ENCODE measurements at regions of chr2 and their contacts with region 1.

Region 1: GRCh38 chr2:135709992-135710391 is 31.7 kb upstream of the UBXN4 start:
- DNase-seq: no peak
- ATAC-seq: peak; percentile 89
- H3K4me3 ChIP-seq: no peak overlapping the region
- H3K27ac ChIP-seq: no peak overlapping the region
- H3K4me1 ChIP-seq: no peaks in the 10 kb centered on the region
- H3K27me3 ChIP-seq: no peaks in the 10 kb centered on the region
- CTCF ChIP-seq: peak; percentile 87 to 89 (median 89)
- EP300 ChIP-seq: no peak
- POLR2A ChIP-seq: no peak
- RAD21 ChIP-seq: peak; percentile 95

Region 2: GRCh38 chr2:135004005-135004746 is 705.8 kb before region 1 on chr2:
- CTCF ChIA-PET with region 1: interaction called, 124 read pairs
- POLR2A ChIA-PET with region 1: no interaction called
- RAD21 ChIA-PET with region 1: interaction called, 51 read pairs
- SMC1A ChIA-PET with region 1: interaction called, 41 read pairs
- in situ Hi-C with region 1: loop called (anchors 5 kb)
- intact Hi-C with region 1: loop called (anchors 1 kb)
- DNase-seq: peak; percentile 17
- ATAC-seq: peak; percentile 100
- H3K4me3 ChIP-seq: no peak overlapping the region
- H3K27ac ChIP-seq: no peak overlapping the region
- H3K4me1 ChIP-seq: no peaks in the 10 kb centered on the region
- H3K27me3 ChIP-seq: peaks cover 0 to 2% of the 10 kb centered on the region in 2 experiments; a peak in 1 of 4 replicates
- CTCF ChIP-seq: peak; percentile 94 to 98 (median 96); a peak in 5 of 6 replicates
- EP300 ChIP-seq: no peak
- POLR2A ChIP-seq: no peak
- RAD21 ChIP-seq: peak; percentile 95

Region 3: GRCh38 chr2:135150684-135151083 is 559.3 kb before region 1 on chr2:
- CTCF ChIA-PET with region 1: no interaction called
- POLR2A ChIA-PET with region 1: no interaction called
- RAD21 ChIA-PET with region 1: no interaction called
- SMC1A ChIA-PET with region 1: no interaction called
- in situ Hi-C with region 1: no loop called
- intact Hi-C with region 1: loop called (anchors 10 kb)
- DNase-seq: no peak
- ATAC-seq: no peak
- H3K4me3 ChIP-seq: no peak overlapping the region
- H3K27ac ChIP-seq: no peak overlapping the region
- H3K4me1 ChIP-seq: peaks cover 8% of the 10 kb centered on the region
- H3K27me3 ChIP-seq: no peaks in the 10 kb centered on the region
- CTCF ChIP-seq: no peak
- EP300 ChIP-seq: no peak
- POLR2A ChIP-seq: no peak
- RAD21 ChIP-seq: no peak

Region 4: DNA sequence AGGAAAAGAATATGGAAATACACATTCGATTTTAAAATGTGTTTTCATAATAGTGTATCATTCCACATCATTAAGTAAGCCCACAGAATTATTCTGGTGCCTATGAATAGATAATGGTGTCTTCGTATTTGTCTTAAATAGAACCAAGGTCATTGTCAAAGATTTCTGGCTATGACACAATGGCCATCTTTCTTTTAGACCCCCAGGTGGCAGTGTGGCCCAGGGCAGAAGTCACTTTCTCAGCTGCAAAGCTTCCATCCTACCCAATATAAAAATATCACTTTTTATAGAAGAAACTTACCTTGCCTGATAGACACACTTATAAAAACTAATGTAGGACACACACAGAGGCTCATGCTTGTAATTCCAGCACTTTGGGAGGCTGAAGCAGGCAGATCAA is 236.4 kb before region 1 on chr2:
- CTCF ChIA-PET with region 1: interaction called, 102 read pairs
- POLR2A ChIA-PET with region 1: interaction called, 9 read pairs
- RAD21 ChIA-PET with region 1: interaction called, 64 read pairs
- SMC1A ChIA-PET with region 1: interaction called, 66 read pairs
- in situ Hi-C with region 1: loop called (anchors 5 kb)
- intact Hi-C with region 1: loop called (anchors 1 kb)
- DNase-seq: peak; percentile 5
- ATAC-seq: peak; percentile 86
- H3K4me3 ChIP-seq: no peak overlapping the region
- H3K27ac ChIP-seq: no peak overlapping the region
- H3K4me1 ChIP-seq: no peaks in the 10 kb centered on the region
- H3K27me3 ChIP-seq: no peaks in the 10 kb centered on the region
- CTCF ChIP-seq: peak; percentile 52 to 76 (median 62)
- EP300 ChIP-seq: no peak
- POLR2A ChIP-seq: no peak
- RAD21 ChIP-seq: peak; percentile 85

Region 5: DNA sequence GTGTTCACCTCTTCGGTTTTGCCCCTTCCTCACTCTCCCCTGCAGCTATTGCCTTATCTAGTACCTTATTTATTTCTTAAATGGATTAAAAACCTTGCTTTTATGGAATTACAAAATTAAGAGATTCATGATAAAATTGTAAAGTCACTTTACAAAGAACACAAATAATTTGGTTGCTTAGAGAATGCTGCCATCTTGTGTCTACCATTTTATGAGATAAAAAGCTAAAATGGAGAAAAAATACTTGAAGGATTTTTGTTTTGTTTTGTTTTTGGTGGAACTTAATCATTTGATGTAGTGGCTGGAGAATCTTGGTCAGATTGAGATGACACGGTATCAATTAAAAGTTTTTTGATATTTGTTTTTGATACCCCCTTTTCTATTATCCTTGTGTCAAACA is 109.1 kb before region 1 on chr2:
- CTCF ChIA-PET with region 1: interaction called, 21 read pairs
- POLR2A ChIA-PET with region 1: no interaction called
- RAD21 ChIA-PET with region 1: interaction called, 4 read pairs
- SMC1A ChIA-PET with region 1: no interaction called
- in situ Hi-C with region 1: no loop called
- intact Hi-C with region 1: no loop called
- DNase-seq: no peak
- ATAC-seq: no peak
- H3K4me3 ChIP-seq: no peak overlapping the region
- H3K27ac ChIP-seq: no peak overlapping the region
- H3K4me1 ChIP-seq: no peaks in the 10 kb centered on the region
- H3K27me3 ChIP-seq: no peaks in the 10 kb centered on the region
- CTCF ChIP-seq: no peak; a peak in 1 of 6 replicates
- EP300 ChIP-seq: no peak
- POLR2A ChIP-seq: no peak
- RAD21 ChIP-seq: no peak

Region 6: GRCh38 chr2:135689679-135690078 is 20.3 kb before region 1 on chr2:
- CTCF ChIA-PET with region 1: interaction called, 16 read pairs
- POLR2A ChIA-PET with region 1: no interaction called
- RAD21 ChIA-PET with region 1: interaction called, 3 read pairs
- SMC1A ChIA-PET with region 1: interaction called, 11 read pairs
- in situ Hi-C with region 1: no loop called
- intact Hi-C with region 1: no loop called
- DNase-seq: no peak
- ATAC-seq: peak; percentile 60
- H3K4me3 ChIP-seq: peak overlapping the region; percentile 31; the same call in 1 of the 2 replicates
- H3K27ac ChIP-seq: peak overlapping the region; percentile 76
- H3K4me1 ChIP-seq: peaks cover 17% of the 10 kb centered on the region
- H3K27me3 ChIP-seq: no peaks in the 10 kb centered on the region
- CTCF ChIP-seq: no peak
- EP300 ChIP-seq: no peak
- POLR2A ChIP-seq: no peak
- RAD21 ChIP-seq: no peak

Region 7: DNA sequence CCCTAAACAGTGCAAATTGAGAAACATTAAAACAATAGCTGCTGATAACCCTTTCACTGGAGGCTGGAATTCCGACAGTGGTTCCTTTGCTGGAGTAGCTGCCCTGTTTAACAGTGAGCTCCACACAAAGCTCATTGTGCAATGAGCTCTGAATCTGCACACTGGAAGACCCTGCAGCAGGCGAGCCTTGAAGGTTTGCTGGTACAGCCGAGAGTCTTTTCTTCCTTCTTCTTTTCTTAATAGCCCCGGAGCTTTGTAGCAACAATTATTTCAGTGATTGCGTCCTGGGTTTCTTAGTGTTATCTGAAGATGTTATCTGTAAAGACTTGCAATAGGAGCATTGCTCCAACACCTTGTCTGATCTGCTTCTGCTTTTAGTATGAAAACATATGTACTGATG is 458.7 kb after region 1 on chr2:
- CTCF ChIA-PET with region 1: no interaction called
- POLR2A ChIA-PET with region 1: no interaction called
- RAD21 ChIA-PET with region 1: no interaction called
- SMC1A ChIA-PET with region 1: no interaction called
- in situ Hi-C with region 1: no loop called
- intact Hi-C with region 1: no loop called
- DNase-seq: no peak
- ATAC-seq: no peak
- H3K4me3 ChIP-seq: no peak overlapping the region
- H3K27ac ChIP-seq: no peak overlapping the region
- H3K4me1 ChIP-seq: no peaks in the 10 kb centered on the region
- H3K27me3 ChIP-seq: peaks cover 0 to 8% of the 10 kb centered on the region in 2 experiments; a peak in 2 of 4 replicates
- CTCF ChIP-seq: no peak
- EP300 ChIP-seq: no peak
- POLR2A ChIP-seq: no peak
- RAD21 ChIP-seq: no peak